ENCODE measurements at regions of chr18 and their contacts with region 1.

Region 1: GRCh38 chr18:12308386-12309100 is 502 bp downstream of the TUBB6 start:
- DNase-seq: peak; percentile 71
- H3K4me3 ChIP-seq: peak overlapping the region; percentile 89
- H3K27ac ChIP-seq: peak overlapping the region; percentile 86
- H3K27me3 ChIP-seq: no peaks in the 10 kb centered on the region
- CTCF ChIP-seq: no peak

Region 2: DNA sequence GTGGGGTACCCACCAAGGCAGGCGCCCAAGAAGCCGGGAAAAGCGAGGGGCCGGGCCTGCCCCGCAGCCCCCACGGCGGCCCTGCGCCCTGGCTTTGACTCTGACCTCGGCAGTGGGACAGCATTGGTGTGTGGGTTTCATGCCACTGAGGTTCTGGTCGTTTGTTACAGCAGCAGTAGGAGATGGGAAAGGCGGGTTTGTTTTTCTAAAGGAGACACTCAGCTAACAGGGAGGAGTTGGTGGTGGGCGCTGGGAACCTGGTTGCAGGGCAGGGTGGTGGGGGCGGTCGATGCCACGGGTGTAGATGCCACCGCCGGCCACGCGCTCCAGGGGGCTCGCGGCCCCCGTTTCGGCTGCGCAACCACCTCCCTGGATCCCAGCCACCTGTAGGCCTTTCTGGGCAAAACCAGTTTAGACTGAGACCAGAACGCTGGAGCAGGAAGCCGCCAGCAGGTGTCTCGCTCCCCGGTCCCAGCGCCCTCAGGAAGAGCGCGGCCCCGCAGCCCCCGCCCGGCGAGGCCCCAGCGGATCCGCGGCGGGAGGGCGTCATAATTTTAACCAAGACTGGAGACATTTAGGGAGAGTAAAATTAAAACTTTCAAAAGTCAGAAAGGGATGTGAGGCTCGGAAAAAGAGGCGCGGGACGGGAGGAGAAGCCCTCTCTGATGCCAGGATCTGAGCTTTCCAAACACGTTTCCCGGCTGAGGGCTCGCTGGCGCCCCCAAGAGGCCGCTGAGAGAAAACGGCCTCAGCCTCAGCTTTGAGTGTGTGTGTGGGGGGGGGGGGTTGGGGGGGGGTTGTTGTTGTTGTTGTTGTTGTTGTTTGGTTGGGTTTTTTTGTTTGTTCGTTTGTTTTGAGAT is 36.9 kb before region 1 on chr18:
- CTCF ChIA-PET with region 1: interaction called, 19 read pairs
- POLR2A ChIA-PET with region 1: interaction called, 11 read pairs
- DNase-seq: no peak
- H3K4me3 ChIP-seq: peak overlapping the region; percentile 59
- H3K27ac ChIP-seq: peak overlapping the region; percentile 31
- H3K27me3 ChIP-seq: peaks cover 3% of the 10 kb centered on the region
- CTCF ChIP-seq: peak; percentile 75

Region 3: GRCh38 chr18:12278741-12279682 is 29.5 kb before region 1 on chr18:
- CTCF ChIA-PET with region 1: interaction called, 5 read pairs
- POLR2A ChIA-PET with region 1: interaction called, 51 read pairs
- DNase-seq: peak; percentile 97
- H3K4me3 ChIP-seq: peak overlapping the region; percentile 66
- H3K27ac ChIP-seq: peak overlapping the region; percentile 100
- H3K27me3 ChIP-seq: no peaks in the 10 kb centered on the region
- CTCF ChIP-seq: 0 out of 2 replicates have a peak, but pooled peaks have one; percentile 17

Region 4: DNA sequence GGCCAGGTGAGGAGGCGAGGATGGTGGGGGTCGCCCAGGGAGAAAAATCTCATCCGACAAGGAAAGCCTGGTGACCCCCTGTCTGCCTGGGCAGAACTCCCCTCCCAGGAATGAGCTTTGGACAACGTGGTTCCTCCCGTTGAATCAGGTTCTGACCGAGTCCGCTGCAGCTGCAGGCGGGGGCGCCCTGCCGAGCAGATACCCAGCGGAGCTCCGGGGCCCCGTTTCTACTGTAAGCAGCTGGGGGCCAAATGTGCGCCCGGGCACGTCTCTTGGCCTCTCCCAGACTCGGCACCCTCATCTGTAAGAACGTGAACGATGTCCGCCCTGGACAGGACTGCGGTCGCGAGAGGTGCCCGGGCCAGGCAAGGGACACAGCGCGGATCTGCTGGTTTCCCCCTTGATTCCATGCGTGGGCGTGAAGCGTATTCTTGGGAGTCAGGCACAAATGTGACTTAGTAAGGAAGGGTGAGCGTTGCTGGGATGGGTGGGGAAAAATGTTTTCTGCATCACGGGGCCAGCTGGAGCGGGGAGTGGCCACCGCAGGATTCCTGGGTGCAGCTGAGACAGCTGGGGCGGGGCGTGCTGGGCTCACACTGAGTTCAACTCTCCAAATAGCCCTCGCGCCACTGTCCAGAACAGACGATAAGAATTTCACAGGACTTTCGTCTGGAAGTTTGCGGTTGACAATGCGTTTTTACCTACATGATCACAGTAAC is 20.7 kb before region 1 on chr18:
- CTCF ChIA-PET with region 1: interaction called, 5 read pairs
- POLR2A ChIA-PET with region 1: interaction called, 48 read pairs
- DNase-seq: peak; percentile 85
- H3K4me3 ChIP-seq: peak overlapping the region; percentile 61
- H3K27ac ChIP-seq: peak overlapping the region; percentile 99
- H3K27me3 ChIP-seq: no peaks in the 10 kb centered on the region
- CTCF ChIP-seq: 0 out of 2 replicates have a peak, but pooled peaks have one; percentile 7

Region 5: DNA sequence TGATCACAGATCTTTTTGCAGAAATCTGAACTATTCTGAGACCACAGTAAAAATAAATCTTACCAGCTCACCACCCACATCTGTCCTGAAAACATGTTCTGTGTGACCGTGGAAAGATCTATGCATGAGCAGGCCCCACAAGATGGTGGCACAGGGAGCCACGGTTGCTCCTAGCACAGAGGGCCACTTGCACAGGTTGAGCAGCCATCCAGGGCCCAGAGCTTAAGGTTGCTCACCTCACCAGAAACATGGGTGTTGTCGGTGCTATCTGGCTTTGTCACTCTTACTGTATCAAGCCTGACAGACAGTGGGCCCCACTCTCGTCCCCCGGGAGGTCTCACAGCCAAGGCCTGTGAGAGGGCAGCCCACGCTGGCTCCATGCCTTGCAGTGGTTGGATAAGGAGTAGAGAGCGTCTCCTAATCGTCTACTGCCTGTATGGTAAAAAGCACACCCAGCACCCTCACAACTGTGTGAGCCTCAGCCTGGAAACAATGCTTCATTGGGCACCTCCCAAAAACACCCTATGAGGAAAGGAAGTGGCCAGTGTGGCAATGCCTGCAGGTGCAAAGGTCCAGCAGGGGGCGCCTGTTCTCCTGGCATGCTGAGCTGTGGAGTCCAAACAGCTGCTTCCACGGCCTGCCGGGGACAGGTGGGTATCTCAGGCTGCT is 19.1 kb after region 1 on chr18:
- CTCF ChIA-PET with region 1: interaction called, 18 read pairs
- POLR2A ChIA-PET with region 1: interaction called, 11 read pairs
- DNase-seq: no peak
- H3K4me3 ChIP-seq: no peak overlapping the region
- H3K27ac ChIP-seq: peak overlapping the region; percentile 61
- H3K27me3 ChIP-seq: no peaks in the 10 kb centered on the region
- CTCF ChIP-seq: peak; percentile 83

Region 6: GRCh38 chr18:12376718-12377555 is 68.4 kb after region 1 on chr18 and contains the start of gene AFG3L2:
- CTCF ChIA-PET with region 1: no interaction called
- POLR2A ChIA-PET with region 1: interaction called, 15 read pairs
- DNase-seq: peak; percentile 98
- H3K4me3 ChIP-seq: peak within 1 kb of the TSS; percentile 82
- H3K27ac ChIP-seq: peak within 1 kb of the TSS; percentile 98
- H3K27me3 ChIP-seq: no peaks in the 10 kb centered on the region
- CTCF ChIP-seq: no peak
- polyA plus RNA-seq, gene AFG3L2: 30.3 and 38.0 TPM in 2 replicates

Region 7: GRCh38 chr18:12702221-12703095 is 393.9 kb after region 1 on chr18 and contains the starts of genes CEP76 and PSMG2:
- CTCF ChIA-PET with region 1: no interaction called
- POLR2A ChIA-PET with region 1: no interaction called
- DNase-seq: peak; percentile 46
- H3K4me3 ChIP-seq: peak within 1 kb of the TSS; percentile 90
- H3K27ac ChIP-seq: peak within 1 kb of the TSS; percentile 93
- H3K27me3 ChIP-seq: no peaks in the 10 kb centered on the region
- CTCF ChIP-seq: no peak
- polyA plus RNA-seq, gene CEP76: 5.6 and 7.6 TPM in 2 replicates
- polyA plus RNA-seq, gene PSMG2: 79.4 and 96.2 TPM in 2 replicates